PC-9 (cell line): ENCODE measurements at regions of chr14 and their contacts with region 1.

Region 1: DNA sequence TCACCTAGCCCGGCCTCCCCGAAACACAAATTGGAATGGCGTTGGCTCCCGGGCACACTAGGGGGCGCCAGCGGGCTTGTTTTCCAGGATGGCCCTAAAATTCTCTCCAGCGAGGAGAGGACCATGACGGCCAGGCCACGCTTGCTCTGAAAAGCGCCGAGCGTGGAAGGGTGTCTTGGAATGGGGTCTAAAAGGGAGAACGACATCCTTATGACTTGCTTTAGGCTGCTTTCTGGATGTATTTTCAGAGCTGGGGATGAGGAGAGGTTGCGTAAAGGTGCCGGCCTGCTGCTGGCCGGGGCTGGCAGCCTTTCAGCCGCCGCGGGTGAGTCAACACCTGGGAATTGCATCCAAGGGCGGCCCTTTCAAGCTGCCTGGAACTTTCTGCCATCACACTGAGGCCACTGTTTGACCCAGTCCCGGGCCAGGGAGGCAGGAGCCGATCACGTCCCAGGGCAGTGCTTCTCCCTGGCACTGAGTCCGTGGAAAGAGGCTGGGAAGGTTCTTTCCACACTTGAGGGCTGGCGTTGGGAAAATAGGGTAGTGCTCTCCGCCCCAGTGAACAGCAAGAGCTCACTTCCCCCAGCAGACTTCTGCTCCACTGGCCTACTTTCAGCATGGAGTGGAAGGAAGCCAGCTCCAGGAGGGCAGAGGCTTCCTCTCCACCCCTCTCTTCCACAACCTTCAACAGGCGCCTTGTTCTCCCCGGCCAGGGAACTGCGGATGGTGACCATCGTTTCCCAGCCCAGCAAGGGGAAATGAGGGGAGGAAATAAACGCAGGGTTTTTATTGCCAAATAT is 216.2 kb downstream of the TTC8 start:
- DNase-seq: peak; percentile 52 to 65
- H3K4me3 ChIP-seq: peak overlapping the region; percentile 50; the same call in 1 of the 2 replicates
- H3K27ac ChIP-seq: no peak overlapping the region
- H3K4me1 ChIP-seq: peaks cover 6% of the 10 kb centered on the region; the same call in 1 of the 2 replicates
- H3K27me3 ChIP-seq: peaks cover 11% of the 10 kb centered on the region; the same call in 1 of the 2 replicates
- CTCF ChIP-seq: peak; percentile 96

Region 2: GRCh38 chr14:88385345-88386101 is 655.1 kb before region 1 on chr14 and contains the start of gene SPATA7:
- CTCF ChIA-PET with region 1: no interaction called
- POLR2A ChIA-PET with region 1: no interaction called
- intact Hi-C with region 1: no loop called
- DNase-seq: peak; percentile 53 to 69
- H3K4me3 ChIP-seq: peak within 1 kb of the TSS; percentile 80
- H3K27ac ChIP-seq: no peak within 1 kb of the TSS
- H3K4me1 ChIP-seq: 0 out of 2 replicates have a peak, but pooled peaks cover 5% of the 10 kb centered on the region
- H3K27me3 ChIP-seq: no peaks in the 10 kb centered on the region
- CTCF ChIP-seq: no peak
- total RNA-seq, gene SPATA7: 2.4 and 2.9 TPM in 2 replicates

Region 3: DNA sequence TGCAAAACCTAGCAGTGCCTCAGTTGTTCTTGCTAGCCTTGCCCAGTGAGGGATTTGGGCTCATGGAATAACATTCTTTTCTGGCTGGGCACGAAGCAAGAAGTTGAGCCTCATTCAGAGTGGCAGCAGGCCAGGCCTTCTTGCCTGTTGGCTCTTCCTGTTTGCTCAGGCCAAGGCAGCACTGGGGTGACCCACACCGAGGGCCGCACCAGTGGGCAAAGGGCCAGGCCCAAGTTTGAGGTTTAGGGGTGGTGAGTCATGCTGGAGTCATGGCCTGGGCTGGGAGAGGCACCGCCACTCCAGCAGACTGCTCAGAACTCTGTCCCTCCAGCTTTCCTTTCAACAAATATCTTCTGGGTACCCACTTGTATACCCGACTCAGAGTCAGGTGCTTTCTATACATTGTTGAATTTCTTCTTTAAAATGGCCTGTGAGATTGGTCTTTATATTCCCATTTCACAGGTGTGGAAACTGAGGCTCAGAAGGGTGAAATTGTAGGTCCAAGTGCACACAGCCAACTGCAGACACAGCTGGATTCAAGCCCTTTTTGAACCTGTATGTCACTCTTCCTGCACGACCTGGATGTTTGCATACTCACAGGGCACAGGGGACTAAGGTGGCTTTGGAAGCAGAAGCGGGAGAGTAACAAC is 97.0 kb after region 1 on chr14:
- CTCF ChIA-PET with region 1: no interaction called
- POLR2A ChIA-PET with region 1: no interaction called
- intact Hi-C with region 1: loop called (anchors 2 kb)
- DNase-seq: peak; percentile 64 to 79
- H3K4me3 ChIP-seq: no peak overlapping the region
- H3K27ac ChIP-seq: no peak overlapping the region
- H3K4me1 ChIP-seq: 0 out of 2 replicates have a peak, but pooled peaks cover 5% of the 10 kb centered on the region
- H3K27me3 ChIP-seq: 0 out of 2 replicates have a peak, but pooled peaks cover 6% of the 10 kb centered on the region
- CTCF ChIP-seq: no peak

Region 4: GRCh38 chr14:89237921-89238529 is 197.4 kb after region 1 on chr14:
- CTCF ChIA-PET with region 1: no interaction called
- POLR2A ChIA-PET with region 1: no interaction called
- intact Hi-C with region 1: loop called (anchors 5 kb)
- DNase-seq: no peak
- H3K4me3 ChIP-seq: no peak overlapping the region
- H3K27ac ChIP-seq: no peak overlapping the region
- H3K4me1 ChIP-seq: no peaks in the 10 kb centered on the region
- H3K27me3 ChIP-seq: 0 out of 2 replicates have a peak, but pooled peaks cover 27% of the 10 kb centered on the region
- CTCF ChIP-seq: peak; percentile 33

Region 5: GRCh38 chr14:89317051-89317691 is 276.5 kb after region 1 on chr14:
- CTCF ChIA-PET with region 1: no interaction called
- POLR2A ChIA-PET with region 1: no interaction called
- intact Hi-C with region 1: loop called (anchors 10 kb)
- DNase-seq: no peak
- H3K4me3 ChIP-seq: no peak overlapping the region
- H3K27ac ChIP-seq: no peak overlapping the region
- H3K4me1 ChIP-seq: no peaks in the 10 kb centered on the region
- H3K27me3 ChIP-seq: 0 out of 2 replicates have a peak, but pooled peaks cover 13% of the 10 kb centered on the region
- CTCF ChIP-seq: no peak

Region 6: GRCh38 chr14:89417469-89418225 is 377.0 kb after region 1 on chr14:
- CTCF ChIA-PET with region 1: no interaction called
- POLR2A ChIA-PET with region 1: no interaction called
- intact Hi-C with region 1: loop called (anchors 2 kb)
- DNase-seq: peak in 1 of 2 experiments; percentile 14
- H3K4me3 ChIP-seq: no peak overlapping the region
- H3K27ac ChIP-seq: no peak overlapping the region
- H3K4me1 ChIP-seq: no peaks in the 10 kb centered on the region
- H3K27me3 ChIP-seq: no peaks in the 10 kb centered on the region
- CTCF ChIP-seq: no peak

Region 7: GRCh38 chr14:89915114-89915878 is 874.6 kb after region 1 on chr14:
- CTCF ChIA-PET with region 1: no interaction called
- POLR2A ChIA-PET with region 1: no interaction called
- intact Hi-C with region 1: loop called (anchors 2 kb)
- DNase-seq: peak; percentile 14 to 43
- H3K4me3 ChIP-seq: no peak overlapping the region
- H3K27ac ChIP-seq: no peak overlapping the region
- H3K4me1 ChIP-seq: 0 out of 2 replicates have a peak, but pooled peaks cover 4% of the 10 kb centered on the region
- H3K27me3 ChIP-seq: no peaks in the 10 kb centered on the region
- CTCF ChIP-seq: peak; percentile 86